Thyroid gland (tissue), 4 donors: ENCODE measurements at regions of chr17 and their contacts with region 1.

Region 1: GRCh38 chr17:78970834-78971773 is 8.6 kb downstream of the LGALS3BP start:
- DNase-seq: peak; percentile 87 to 88
- H3K4me3 ChIP-seq: no peak overlapping the region
- H3K27ac ChIP-seq: peak overlapping the region; percentile 45 to 81 (median 51)
- H3K4me1 ChIP-seq: peaks cover 23 to 29% of the 10 kb centered on the region in 2 donors
- H3K27me3 ChIP-seq: no peaks in the 10 kb centered on the region
- CTCF ChIP-seq: peak; percentile 77 to 95 (median 88)
- POLR2A ChIP-seq: peak in 1 of 2 donors; percentile 20

Region 2: DNA sequence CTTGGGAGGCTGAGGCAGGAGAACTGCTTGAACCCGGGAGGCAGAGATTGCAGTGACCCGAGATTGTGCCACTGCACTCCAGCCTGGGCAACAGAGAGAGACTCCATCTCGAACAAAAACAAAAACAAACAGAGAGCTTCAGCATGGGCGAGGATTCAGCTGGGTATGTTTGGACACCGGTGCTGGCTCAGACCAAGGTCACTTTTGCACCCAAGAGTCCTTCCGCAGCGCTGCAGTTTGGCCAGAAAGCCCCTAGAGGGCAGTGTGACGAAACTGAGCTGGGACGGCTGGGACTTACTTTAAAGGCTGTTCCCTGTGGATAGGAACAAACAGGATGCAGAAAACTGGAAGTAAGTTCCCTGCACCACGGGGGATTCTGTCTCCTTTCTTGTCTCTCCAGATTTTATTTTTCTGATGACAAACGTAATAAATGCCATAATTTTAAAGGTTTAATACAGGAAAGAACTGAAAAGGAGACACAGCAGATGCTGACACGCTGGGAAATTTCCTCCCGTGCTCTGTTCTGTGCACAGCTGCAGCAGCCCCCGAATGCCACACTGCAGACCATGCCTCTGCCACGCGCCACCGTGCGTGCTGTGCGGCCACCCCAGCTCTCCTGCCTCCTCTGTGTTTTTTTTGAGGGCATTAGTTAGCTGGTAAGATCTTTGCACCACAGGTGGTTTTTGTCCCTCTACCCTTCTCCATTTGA is 105.3 kb before region 1 on chr17:
- intact Hi-C with region 1: loop called (anchors 2 kb)
- DNase-seq: peak; percentile 72 to 85
- H3K4me3 ChIP-seq: no peak overlapping the region
- H3K27ac ChIP-seq: no peak overlapping the region
- H3K4me1 ChIP-seq: no peaks in the 10 kb centered on the region
- H3K27me3 ChIP-seq: no peaks in the 10 kb centered on the region
- CTCF ChIP-seq: peak; percentile 81 to 91 (median 88)
- POLR2A ChIP-seq: no peak

Region 3: GRCh38 chr17:78923660-78924453 is 47.2 kb before region 1 on chr17:
- intact Hi-C with region 1: loop called (anchors 5 kb)
- DNase-seq: peak; percentile 84 to 86
- H3K4me3 ChIP-seq: peak overlapping the region; percentile 6 to 73 (median 25)
- H3K27ac ChIP-seq: peak overlapping the region; percentile 4 to 71 (median 70)
- H3K4me1 ChIP-seq: peaks cover 13 to 30% of the 10 kb centered on the region in 2 donors
- H3K27me3 ChIP-seq: no peaks in the 10 kb centered on the region
- CTCF ChIP-seq: no peak
- POLR2A ChIP-seq: peak in 1 of 2 donors; percentile 12